ENCODE measurements at regions of chr17 and their contacts with region 1.

Region 1: DNA sequence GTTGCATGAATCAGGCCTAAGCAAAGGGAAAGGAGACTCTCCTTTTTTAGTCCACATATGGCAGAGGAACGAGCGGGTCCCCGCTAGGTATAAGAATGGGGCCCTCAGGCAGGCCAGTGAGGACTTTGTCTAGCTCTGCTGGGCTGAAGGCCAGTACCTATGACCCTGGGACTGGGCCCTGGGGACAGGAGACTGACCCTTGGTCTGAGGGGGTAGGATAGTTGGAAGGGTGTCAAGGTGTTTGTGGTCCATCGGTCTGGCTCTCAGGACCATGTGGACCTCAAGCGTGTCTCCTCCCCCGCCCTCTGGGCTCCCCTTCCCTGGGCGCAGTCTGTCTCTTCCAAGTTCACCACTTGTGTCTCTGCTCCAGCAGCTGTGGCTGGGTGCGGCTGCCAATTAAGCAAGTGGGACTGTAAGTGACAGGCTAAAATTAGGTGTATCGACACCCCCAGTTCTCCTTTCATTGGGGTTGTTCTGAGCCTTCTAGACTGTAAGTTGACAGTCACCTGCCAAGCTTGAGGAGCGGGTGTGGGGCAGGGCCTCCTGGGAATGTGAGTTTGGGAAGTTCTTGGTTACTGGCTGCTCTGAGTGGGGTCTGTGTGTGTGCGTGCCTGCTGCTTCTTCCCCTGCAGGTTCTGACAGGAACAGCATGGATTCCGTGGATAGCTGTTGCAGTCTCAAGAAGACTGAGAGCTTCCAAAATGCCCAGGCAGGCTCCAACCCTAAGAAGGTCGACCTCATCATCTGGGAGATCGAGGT is 24.5 kb downstream of the AKAP1 start:
- DNase-seq: peak; percentile 35
- H3K4me3 ChIP-seq: no peak overlapping the region
- H3K27ac ChIP-seq: no peak overlapping the region
- H3K4me1 ChIP-seq: peaks cover 13% of the 10 kb centered on the region
- H3K27me3 ChIP-seq: no peaks in the 10 kb centered on the region
- CTCF ChIP-seq: peak; percentile 39; the same call in 1 of the 2 replicates

Region 2: GRCh38 chr17:56908001-56908542 is 201.5 kb before region 1 on chr17:
- CTCF ChIA-PET with region 1: no interaction called
- POLR2A ChIA-PET with region 1: no interaction called
- intact Hi-C with region 1: no loop called
- DNase-seq: no peak
- H3K4me3 ChIP-seq: no peak overlapping the region
- H3K27ac ChIP-seq: no peak overlapping the region
- H3K4me1 ChIP-seq: peaks cover 4% of the 10 kb centered on the region
- H3K27me3 ChIP-seq: no peaks in the 10 kb centered on the region
- CTCF ChIP-seq: no peak

Region 3: DNA sequence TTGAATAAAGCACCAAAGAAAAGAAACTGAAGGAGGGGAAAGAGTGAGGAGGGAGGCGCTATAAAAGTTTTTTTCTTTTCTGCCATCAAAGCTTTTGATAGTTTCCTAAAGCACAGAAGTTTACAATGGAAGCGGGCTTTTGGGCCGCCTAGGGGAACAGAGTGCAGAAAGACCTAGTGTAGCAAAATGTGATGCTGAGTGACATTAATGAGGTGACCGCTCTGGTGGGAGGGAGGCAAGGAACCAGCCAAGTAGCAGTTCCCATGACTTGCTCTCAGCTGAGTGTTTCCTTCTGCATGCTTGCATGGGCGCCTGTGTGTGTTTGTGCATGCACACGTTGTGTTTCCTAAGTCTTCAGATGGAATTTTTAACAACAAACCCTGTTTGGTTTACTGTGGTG is 162.2 kb after region 1 on chr17:
- CTCF ChIA-PET with region 1: no interaction called
- POLR2A ChIA-PET with region 1: no interaction called
- intact Hi-C with region 1: no loop called
- DNase-seq: no peak
- H3K4me3 ChIP-seq: no peak overlapping the region
- H3K27ac ChIP-seq: no peak overlapping the region
- H3K4me1 ChIP-seq: no peaks in the 10 kb centered on the region
- H3K27me3 ChIP-seq: no peaks in the 10 kb centered on the region
- CTCF ChIP-seq: no peak

Region 4: DNA sequence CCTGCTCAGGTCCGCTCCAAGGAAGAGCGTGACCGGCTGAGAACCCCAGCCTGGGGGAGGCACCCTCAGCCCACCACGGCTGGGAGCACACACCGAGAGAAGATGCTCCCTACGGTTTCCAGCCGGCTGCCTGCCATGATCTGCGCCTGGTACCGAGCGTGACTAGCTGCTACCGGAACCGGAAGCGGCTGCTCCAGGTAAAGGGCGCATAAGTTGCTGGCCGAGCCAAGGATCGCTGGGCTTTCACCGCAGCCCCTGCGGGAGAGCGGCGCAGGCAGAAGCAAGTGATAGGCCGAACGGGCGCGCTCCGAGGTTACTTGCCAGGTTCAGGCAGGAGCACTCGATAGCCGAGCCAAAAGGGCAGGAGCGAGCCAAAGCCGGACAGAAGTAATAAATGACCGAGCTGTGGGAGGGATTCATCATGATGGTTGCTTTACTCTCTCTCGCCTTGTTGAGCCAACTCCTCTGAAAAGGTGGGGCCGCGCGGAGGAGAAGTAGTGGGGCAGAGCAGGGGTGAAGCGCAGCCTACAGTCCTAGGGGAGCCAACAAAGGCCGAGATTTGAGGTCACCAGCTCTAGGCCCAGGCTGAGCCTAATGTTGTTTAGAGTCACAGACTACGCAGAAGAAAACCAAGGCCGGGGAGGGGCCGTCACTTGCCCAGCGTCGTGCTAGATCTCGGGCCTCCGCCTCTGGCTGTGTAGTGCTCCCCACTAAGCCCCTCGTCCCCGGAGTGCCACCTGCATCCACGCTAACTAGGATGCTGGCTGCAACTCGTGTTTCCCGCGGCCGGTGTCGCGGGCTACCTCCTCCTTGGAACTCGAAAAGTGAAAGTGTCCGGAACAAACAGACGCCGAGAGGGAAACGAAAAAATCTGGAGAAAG is 740.5 kb after region 1 on chr17 and contains the start of gene MRPS23:
- CTCF ChIA-PET with region 1: interaction called, 16 read pairs
- POLR2A ChIA-PET with region 1: no interaction called
- intact Hi-C with region 1: no loop called
- DNase-seq: peak; percentile 99
- H3K4me3 ChIP-seq: peak within 1 kb of the TSS; percentile 85
- H3K27ac ChIP-seq: peak within 1 kb of the TSS; percentile 78
- H3K4me1 ChIP-seq: peaks cover 17% of the 10 kb centered on the region
- H3K27me3 ChIP-seq: no peaks in the 10 kb centered on the region
- CTCF ChIP-seq: no peak
- total RNA-seq, gene MRPS23: 94.2 and 100 TPM in 2 replicates

Region 5: GRCh38 chr17:58391302-58391984 is 1281.9 kb after region 1 on chr17:
- CTCF ChIA-PET with region 1: no interaction called
- POLR2A ChIA-PET with region 1: interaction called, 10 read pairs
- intact Hi-C with region 1: no loop called
- DNase-seq: peak; percentile 25
- H3K4me3 ChIP-seq: no peak overlapping the region
- H3K27ac ChIP-seq: no peak overlapping the region
- H3K4me1 ChIP-seq: no peaks in the 10 kb centered on the region
- H3K27me3 ChIP-seq: peaks cover 50% of the 10 kb centered on the region
- CTCF ChIP-seq: no peak